Activated naive CD4-positive, alpha-beta T cell treated with anti-CD3 and anti-CD28 coated beads for 36 hours (primary cell): ENCODE measurements at regions of chr21 and their contacts with region 1.

Region 1: GRCh38 chr21:15729674-15730483 is at the start of gene USP25:
- DNase-seq: peak; percentile 77
- H3K4me3 Mint-ChIP-seq: peak within 1 kb of the TSS; percentile 91
- H3K27ac Mint-ChIP-seq: peak within 1 kb of the TSS; percentile 83
- H3K4me1 Mint-ChIP-seq: peaks cover 24% of the 10 kb centered on the region
- H3K27me3 Mint-ChIP-seq: peaks cover 2% of the 10 kb centered on the region
- total RNA-seq, gene USP25: 24.7 to 27.8 TPM

Region 2: DNA sequence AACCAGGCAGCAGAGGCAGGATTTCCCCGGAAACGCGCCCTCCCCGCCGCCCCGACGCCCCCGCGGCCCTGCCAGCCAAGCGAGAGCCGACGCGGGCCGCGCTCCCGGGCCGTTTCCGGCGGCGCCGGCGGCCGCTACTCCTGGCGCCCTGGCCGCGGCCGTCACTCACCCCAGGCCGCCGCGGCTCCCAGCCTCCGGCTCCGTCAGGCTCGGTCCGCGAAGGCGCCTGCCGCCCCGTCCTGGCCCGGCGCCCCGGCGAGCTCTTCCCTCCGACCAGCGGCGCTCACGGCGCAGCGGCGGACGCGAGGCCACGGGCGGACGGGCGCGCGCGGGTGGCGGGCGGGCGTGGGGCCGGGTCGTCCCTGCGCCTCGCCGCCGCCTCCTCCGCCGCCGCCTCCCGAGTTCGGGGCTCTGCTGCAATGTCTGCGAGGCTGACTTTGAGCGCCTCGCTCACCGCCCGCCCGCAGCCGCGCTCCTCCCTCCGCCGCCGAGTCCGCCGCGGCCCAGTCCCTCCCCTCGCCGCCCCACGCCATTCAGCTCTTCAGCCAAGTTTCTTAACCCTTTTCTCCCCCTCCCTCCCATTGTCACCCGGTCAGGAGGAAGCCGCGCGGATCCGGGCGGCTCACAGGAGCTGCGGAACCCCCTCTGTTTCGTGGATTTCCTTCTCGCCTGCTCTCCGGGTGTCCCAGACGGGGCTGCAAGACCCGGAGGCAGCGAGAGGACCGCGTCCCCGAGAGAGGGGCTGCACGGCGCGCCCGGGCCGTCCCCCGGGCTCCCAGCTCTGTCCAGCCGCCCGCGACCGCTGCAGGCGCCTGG is 665.1 kb before region 1 on chr21 and contains the start of gene NRIP1:
- CTCF ChIA-PET with region 1: no interaction called
- intact Hi-C with region 1: loop called (anchors 2 kb)
- DNase-seq: peak; percentile 71
- H3K4me3 Mint-ChIP-seq: peak within 1 kb of the TSS; percentile 90
- H3K27ac Mint-ChIP-seq: peak within 1 kb of the TSS; percentile 94
- H3K4me1 Mint-ChIP-seq: peaks cover 36% of the 10 kb centered on the region
- H3K27me3 Mint-ChIP-seq: no peaks in the 10 kb centered on the region
- total RNA-seq, gene NRIP1: 6.1 to 6.5 TPM

Region 3: GRCh38 chr21:15437883-15438282 is 292.0 kb before region 1 on chr21:
- CTCF ChIA-PET with region 1: no interaction called
- intact Hi-C with region 1: loop called (anchors 1 kb)
- DNase-seq: peak; percentile 28
- H3K4me3 Mint-ChIP-seq: no peak overlapping the region
- H3K27ac Mint-ChIP-seq: peak overlapping the region; percentile 36
- H3K4me1 Mint-ChIP-seq: peaks cover 19% of the 10 kb centered on the region
- H3K27me3 Mint-ChIP-seq: no peaks in the 10 kb centered on the region

Region 4: GRCh38 chr21:15742052-15742670 is 12.3 kb after region 1 on chr21:
- CTCF ChIA-PET with region 1: no interaction called
- intact Hi-C with region 1: loop called (anchors 1 kb)
- DNase-seq: no peak
- H3K4me3 Mint-ChIP-seq: no peak overlapping the region
- H3K27ac Mint-ChIP-seq: peak overlapping the region; percentile 61
- H3K4me1 Mint-ChIP-seq: peaks cover 74% of the 10 kb centered on the region
- H3K27me3 Mint-ChIP-seq: no peaks in the 10 kb centered on the region

Region 5: GRCh38 chr21:16194095-16194787 is 464.4 kb after region 1 on chr21:
- CTCF ChIA-PET with region 1: no interaction called
- intact Hi-C with region 1: loop called (anchors 10 kb)
- DNase-seq: peak; percentile 34
- H3K4me3 Mint-ChIP-seq: peak overlapping the region; percentile 57
- H3K27ac Mint-ChIP-seq: no peak overlapping the region
- H3K4me1 Mint-ChIP-seq: peaks cover 7% of the 10 kb centered on the region
- H3K27me3 Mint-ChIP-seq: no peaks in the 10 kb centered on the region